ENCODE measurements at regions of chr14 and their contacts with region 1.

Region 1: GRCh38 chr14:67571272-67571850 is 28.7 kb downstream of the PIGH start:
- DNase-seq: no peak

Region 2: DNA sequence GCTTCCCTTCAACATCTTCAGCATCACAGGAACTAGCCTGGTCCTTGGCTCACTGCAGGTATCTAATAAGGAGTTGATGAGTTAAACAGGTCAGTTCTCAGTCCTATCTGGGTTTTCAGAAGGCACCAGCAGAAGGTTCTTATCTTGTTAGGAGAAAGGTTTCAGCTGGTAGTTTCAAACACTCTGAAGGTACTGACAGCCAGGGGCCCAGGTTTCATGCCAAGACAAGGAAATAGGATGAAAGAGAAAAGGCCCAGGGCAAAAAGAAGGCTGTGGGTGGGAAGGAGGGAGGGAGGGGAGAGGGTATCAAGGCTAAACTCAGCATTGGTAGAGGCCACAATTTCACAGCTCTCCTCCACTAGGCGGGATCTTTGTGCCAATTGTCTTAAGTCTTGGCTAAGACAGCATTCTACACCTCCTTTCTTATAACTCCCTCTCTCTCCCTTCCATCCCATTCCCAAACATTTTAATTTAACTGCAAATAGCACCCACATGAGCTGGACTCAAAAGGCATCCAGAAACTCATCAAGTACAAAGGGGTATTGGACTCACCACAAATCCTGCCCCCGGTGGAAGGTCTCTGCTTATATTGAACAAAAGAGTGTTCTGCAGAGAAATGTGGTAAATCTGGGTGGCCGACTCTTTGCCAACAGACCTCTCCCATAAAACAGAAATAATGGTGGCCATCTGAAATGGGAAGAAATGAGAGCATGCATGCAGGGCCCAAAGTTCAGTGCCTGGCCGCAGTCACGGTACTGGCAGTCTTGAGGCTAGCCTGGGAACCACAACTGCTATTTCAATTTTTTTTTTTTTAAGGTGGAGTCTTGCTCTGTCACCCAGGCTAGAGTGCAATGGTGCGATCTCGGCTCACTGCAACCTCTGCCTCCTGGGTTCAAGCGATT is 103.9 kb before region 1 on chr14:
- intact Hi-C with region 1: no loop called
- DNase-seq: no peak

Region 3: DNA sequence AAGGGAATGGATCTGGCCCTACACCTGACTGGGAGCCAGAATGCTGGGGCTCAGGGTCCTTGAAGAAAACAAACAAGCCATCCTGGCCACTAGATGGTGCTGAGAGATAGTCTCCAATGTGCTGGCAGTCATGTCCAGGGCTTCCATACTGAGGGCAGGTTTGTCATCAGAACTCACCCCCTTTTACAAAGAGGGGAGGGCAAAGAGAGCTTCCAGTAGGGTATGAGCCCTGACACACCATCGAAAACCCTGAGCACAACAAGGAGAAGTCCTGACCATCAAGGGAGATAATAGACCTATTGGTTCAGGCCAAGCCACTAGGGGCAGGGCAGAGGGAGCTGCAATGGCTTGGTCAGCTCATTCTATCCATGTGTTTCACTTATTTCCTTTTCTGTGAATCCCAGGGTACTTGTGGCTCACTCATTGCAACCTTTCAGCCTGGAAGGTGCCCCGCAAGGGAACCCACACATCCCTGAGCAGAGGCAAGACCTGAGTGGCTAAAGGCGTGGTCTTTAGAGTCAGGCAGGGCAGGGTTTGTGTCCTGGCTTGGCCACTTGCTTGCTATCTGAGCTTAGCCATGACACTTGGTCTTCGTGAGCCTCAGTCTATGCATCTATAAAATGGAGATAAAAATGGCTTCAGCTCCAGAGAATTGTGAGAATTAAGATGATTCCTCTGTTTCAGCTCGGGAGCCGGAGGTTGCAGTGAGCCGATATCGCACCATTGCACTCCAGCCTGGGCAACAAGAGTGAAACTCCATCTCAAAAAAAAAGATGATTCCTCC is 44.5 kb before region 1 on chr14:
- intact Hi-C with region 1: loop called (anchors 5 kb)
- DNase-seq: no peak

Measured in cardiac septum (tissue), 1 donor.